HEK293 (cell line): ENCODE measurements at regions of chr5 and their contacts with region 1.

Region 1: DNA sequence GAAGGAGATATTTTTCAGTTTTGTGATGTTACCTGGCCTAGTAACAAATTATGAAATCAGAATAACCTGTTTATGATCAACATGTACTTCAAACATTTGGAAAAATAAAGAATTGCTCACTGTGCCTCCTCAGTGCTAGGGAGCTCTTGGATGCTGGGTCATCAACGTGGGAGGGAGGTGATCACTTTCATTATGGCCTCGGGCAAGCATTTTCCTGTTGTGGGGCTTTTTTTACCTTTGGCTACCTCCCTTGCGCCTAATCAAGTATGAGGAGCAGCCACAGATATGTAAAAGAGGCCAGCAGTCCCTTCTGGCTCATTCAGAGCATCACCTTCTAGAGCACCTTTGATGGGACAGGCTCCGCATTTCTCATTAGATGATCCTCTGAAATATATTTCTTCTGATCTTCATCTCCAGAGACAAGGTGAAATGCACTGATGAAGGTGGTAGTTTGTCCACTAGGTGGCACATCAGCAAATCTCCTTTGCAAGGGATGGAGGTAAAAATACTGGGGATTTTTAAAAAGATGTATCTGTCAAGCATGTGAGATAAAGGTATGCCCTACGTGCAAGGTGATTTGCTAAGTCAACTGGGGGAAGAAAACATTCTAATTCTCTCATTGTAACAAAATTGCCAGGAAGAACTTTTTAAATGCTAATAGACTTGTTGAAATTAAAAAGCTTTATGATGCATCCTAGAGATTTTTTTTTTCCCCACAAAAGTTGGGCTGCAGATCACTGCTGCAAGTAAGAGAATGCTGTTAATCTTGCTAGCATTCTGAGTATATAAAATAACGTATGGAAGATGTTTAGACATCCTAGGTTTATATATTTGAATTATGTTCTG is 218.2 kb downstream of the MAST4 start:
- H3K4me3 ChIP-seq: no peak overlapping the region
- H3K27ac ChIP-seq: no peak overlapping the region
- H3K4me1 ChIP-seq: peaks cover 4% of the 10 kb centered on the region; the same call in 1 of the 2 replicates
- CTCF ChIP-seq: peak; percentile 27; the same call in 1 of the 2 replicates

Region 2: DNA sequence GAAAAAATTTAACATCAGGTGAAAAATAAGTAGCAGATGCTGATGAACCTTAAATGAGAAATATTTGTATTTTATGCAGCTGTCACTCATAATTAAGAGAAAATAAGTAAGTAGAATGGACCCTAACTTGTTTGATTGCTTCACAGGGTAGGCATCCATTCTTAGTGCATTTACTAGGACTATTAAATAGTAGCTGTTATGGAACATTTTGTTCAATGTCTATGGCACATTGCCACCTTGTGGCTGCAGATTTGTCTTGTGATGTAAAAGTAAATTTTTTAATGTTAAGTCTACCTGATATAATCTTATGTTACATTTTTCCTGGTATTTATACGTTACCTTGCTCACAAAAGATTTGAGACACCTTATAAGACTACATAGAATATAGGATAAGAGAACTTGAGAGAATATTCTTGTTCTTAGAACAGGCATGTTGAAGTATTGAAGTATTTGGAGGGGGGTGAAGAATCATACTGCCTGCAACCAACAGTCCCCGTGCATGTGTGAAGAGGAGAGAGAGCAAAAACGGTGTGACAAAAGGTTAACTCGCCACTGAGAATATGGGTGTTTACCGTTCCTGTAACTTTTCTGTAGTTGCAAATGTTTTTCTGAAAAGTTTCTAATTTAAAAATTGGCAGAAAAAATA is 57.1 kb before region 1 on chr5:
- CTCF ChIA-PET with region 1: no interaction called
- POLR2A ChIA-PET with region 1: no interaction called
- H3K4me3 ChIP-seq: no peak overlapping the region
- H3K27ac ChIP-seq: no peak overlapping the region
- H3K4me1 ChIP-seq: no peaks in the 10 kb centered on the region
- CTCF ChIP-seq: no peak

Region 3: GRCh38 chr5:66828548-66829357 is 14.4 kb after region 1 on chr5:
- CTCF ChIA-PET with region 1: interaction called, 17 read pairs
- POLR2A ChIA-PET with region 1: no interaction called
- H3K4me3 ChIP-seq: peak overlapping the region; percentile 21
- H3K27ac ChIP-seq: no peak overlapping the region
- H3K4me1 ChIP-seq: peaks cover 12% of the 10 kb centered on the region
- CTCF ChIP-seq: no peak